ENCODE measurements at regions of chr15 and their contacts with region 1.

Region 1: GRCh38 chr15:83185561-83185960 is 22.1 kb downstream of the HDGFL3 start:
- DNase-seq: no peak
- ATAC-seq: no peak
- H3K4me3 ChIP-seq: no peak overlapping the region
- H3K4me3 Mint-ChIP-seq: no peak overlapping the region
- H3K27ac ChIP-seq: no peak overlapping the region
- H3K27ac Mint-ChIP-seq: no peak overlapping the region
- H3K4me1 ChIP-seq: no peaks in the 10 kb centered on the region
- H3K4me1 Mint-ChIP-seq: no peaks in the 10 kb centered on the region
- H3K27me3 ChIP-seq: peaks cover 0 to 5% of the 10 kb centered on the region in 2 donors
- H3K27me3 Mint-ChIP-seq: peaks cover 0 to 43% (median 0%) of the 10 kb centered on the region in 5 donors

Region 2: GRCh38 chr15:83129791-83130190 is 55.8 kb before region 1 on chr15:
- CTCF ChIA-PET with region 1: no interaction called
- POLR2A ChIA-PET with region 1: no interaction called
- intact Hi-C with region 1: loop called in 1 of 2 experiments (anchors 10 kb)
- DNase-seq: no peak
- ATAC-seq: no peak
- H3K4me3 ChIP-seq: no peak overlapping the region
- H3K4me3 Mint-ChIP-seq: no peak overlapping the region
- H3K27ac ChIP-seq: no peak overlapping the region
- H3K27ac Mint-ChIP-seq: no peak overlapping the region
- H3K4me1 ChIP-seq: no peaks in the 10 kb centered on the region
- H3K4me1 Mint-ChIP-seq: no peaks in the 10 kb centered on the region
- H3K27me3 ChIP-seq: no peaks in the 10 kb centered on the region
- H3K27me3 Mint-ChIP-seq: no peaks in the 10 kb centered on the region

Measured in naive thymus-derived CD4-positive, alpha-beta T cell (primary cell).